Right ventricle myocardium inferior (tissue), 1 donor: ENCODE measurements at regions of chr11 and their contacts with region 1.

Region 1: DNA sequence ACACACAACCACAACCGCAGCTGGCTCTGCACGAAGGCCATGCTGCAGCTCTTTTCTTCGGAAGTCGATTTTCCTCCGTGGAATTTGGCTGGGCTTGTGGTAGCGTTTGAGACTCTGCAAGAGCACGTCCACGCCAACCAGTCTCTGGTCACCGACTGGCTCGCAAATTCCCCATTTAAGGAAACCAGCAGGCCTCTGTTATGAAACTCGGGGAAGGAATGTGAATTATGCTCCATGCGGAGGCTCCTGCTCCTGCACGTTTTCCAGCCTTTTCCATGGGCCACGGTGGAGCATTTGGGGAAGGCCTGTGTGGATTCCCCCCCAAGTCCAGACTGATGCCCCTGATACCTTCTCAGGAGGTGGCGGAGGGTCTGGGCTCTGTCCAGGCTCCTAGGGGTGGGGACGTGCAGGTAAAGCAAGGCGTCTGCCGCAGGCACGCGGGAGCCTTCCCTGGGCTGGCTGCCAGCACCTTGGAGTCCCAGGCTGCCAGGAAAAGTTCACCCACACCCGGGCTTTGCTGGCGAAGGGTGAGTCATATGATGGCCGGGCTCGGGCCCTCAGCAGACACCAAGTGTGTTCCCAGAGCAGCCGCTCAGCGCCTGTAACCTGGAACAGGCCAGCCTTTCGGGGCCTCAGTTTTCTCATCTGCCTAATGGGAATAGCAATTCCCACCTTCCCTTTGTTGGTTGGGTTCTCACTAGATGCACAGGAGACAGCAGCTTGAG is 41.9 kb downstream of the LRP5 start:
- DNase-seq: peak; percentile 87
- ATAC-seq: peak; percentile 87

Region 2: GRCh38 chr11:68312117-68312779 is 42.1 kb before region 1 on chr11 and contains the start of gene LRP5:
- intact Hi-C with region 1: loop called (anchors 5 kb)
- DNase-seq: peak; percentile 59
- ATAC-seq: peak; percentile 24
- total RNA-seq, gene LRP5: 61.6 TPM

Region 3: GRCh38 chr11:68370211-68371111 is 16.2 kb after region 1 on chr11:
- intact Hi-C with region 1: loop called (anchors 1 kb)
- DNase-seq: no peak
- ATAC-seq: peak; percentile 57